GM10248 (cell line): ENCODE measurements at regions of chr3 and their contacts with region 1.

Region 1: GRCh38 chr3:185770109-185770508 is 54.7 kb downstream of the IGF2BP2 start:
- DNase-seq: no peak
- CTCF ChIP-seq: no peak

Region 2: DNA sequence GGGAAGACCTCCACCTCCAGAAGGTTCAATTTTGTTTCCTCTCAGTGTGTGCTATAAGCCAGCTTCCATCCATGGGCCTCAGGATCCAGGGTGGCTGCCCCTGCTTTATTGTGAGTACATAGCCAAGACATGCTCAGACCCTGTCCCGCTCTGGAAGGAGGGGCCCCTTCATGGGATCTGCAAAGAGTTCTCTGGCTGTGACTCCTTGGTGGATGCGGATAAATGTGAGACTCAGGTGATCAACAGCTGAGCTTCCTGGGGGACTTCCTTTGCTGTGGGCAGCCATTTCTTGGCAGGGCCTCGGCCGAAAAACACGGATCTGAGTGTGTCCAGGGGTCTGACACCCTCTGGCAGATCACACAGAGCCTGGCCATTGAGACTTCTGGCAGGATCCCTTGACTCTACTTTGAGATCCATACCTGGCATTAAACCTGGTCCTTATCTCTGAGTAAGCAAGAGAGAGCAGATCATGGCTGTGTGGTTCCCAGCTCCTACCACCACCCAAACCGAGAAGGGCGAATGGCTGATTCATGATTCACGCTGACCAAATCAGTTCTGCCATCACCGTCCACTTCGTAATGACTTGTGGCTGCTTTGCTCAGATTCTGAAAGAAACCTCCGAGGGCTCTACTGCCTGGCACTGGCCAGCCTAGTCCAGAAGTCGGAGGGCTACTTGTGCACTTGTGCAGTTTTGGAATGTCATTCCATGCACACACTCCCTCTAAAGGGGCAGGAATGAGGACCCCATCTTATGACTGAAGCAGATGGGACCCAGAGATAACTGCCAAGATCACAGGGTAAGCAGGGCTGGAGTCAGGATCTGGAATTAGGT is 115.9 kb before region 1 on chr3:
- CTCF ChIA-PET with region 1: interaction called, 189 read pairs
- POLR2A ChIA-PET with region 1: no interaction called
- DNase-seq: no peak
- CTCF ChIP-seq: no peak

Region 3: GRCh38 chr3:185717121-185717520 is 53.0 kb before region 1 on chr3:
- CTCF ChIA-PET with region 1: interaction called, 20 read pairs
- POLR2A ChIA-PET with region 1: no interaction called
- DNase-seq: no peak
- CTCF ChIP-seq: no peak

Region 4: GRCh38 chr3:185744997-185745843 is 24.9 kb before region 1 on chr3:
- CTCF ChIA-PET with region 1: interaction called, 28 read pairs
- POLR2A ChIA-PET with region 1: no interaction called
- DNase-seq: peak; percentile 34
- CTCF ChIP-seq: no peak